Activated CD4-positive, alpha-beta memory T cell treated with anti-CD3 and anti-CD28 coated beads for 36 hours (primary cell): ENCODE measurements at regions of chrX and their contacts with region 1.

Region 1: GRCh38 chrX:47193475-47194193 is at the start of gene UBA1:
- DNase-seq: peak; percentile 94
- H3K4me3 Mint-ChIP-seq: peak within 1 kb of the TSS; percentile 92
- H3K27ac Mint-ChIP-seq: peak within 1 kb of the TSS; percentile 91
- H3K4me1 Mint-ChIP-seq: peaks cover 54% of the 10 kb centered on the region
- H3K27me3 Mint-ChIP-seq: no peaks in the 10 kb centered on the region
- total RNA-seq, gene UBA1: 266 to 278 TPM

Region 2: GRCh38 chrX:47217642-47218279 is 24.1 kb after region 1 on chrX:
- CTCF ChIA-PET with region 1: interaction called, 3 read pairs
- POLR2A ChIA-PET with region 1: interaction called, 18 read pairs
- intact Hi-C with region 1: loop called (anchors 1 kb)
- DNase-seq: peak; percentile 97
- H3K4me3 Mint-ChIP-seq: peak overlapping the region; percentile 87
- H3K27ac Mint-ChIP-seq: peak overlapping the region; percentile 97
- H3K4me1 Mint-ChIP-seq: peaks cover 32% of the 10 kb centered on the region
- H3K27me3 Mint-ChIP-seq: no peaks in the 10 kb centered on the region

Region 3: DNA sequence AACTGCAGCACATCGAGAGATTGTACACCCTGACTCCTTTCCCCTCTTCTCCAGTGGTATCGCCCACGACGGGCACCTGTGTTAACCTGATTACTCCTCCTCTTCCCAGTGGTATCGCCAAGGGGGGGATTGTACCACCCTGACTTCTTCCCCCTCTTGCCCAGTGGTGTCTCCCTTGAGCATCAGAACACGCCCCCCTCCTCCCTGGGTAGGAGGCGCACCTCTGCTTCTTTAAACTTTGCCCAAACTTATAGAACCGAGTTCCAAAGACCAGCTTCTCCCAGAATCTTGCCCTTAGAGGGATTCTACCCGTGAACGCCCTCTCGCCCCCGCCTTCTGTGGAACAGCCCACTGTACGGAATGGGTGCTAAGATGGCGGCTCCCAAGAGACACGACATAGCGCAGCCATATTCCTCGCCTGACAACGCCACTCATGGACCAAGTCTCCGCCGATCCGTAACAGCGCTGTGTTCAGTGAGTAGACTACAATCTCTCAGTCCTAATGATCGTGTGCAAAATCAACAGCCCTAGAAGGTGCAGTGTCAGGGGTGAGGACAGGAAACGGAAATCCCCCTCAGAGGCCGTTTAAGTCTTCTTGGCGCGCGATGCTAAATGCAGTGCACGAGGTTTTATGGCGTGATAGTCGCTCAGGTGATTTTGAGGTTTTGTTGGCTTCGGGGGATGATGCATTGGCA is 172.5 kb after region 1 on chrX:
- CTCF ChIA-PET with region 1: no interaction called
- POLR2A ChIA-PET with region 1: no interaction called
- intact Hi-C with region 1: loop called (anchors 1 kb)
- DNase-seq: peak; percentile 80
- H3K4me3 Mint-ChIP-seq: peak overlapping the region; percentile 83
- H3K27ac Mint-ChIP-seq: peak overlapping the region; percentile 81
- H3K4me1 Mint-ChIP-seq: peaks cover 13% of the 10 kb centered on the region
- H3K27me3 Mint-ChIP-seq: no peaks in the 10 kb centered on the region

Region 4: GRCh38 chrX:47410649-47411048 is 217.0 kb after region 1 on chrX:
- CTCF ChIA-PET with region 1: no interaction called
- POLR2A ChIA-PET with region 1: no interaction called
- intact Hi-C with region 1: no loop called
- DNase-seq: no peak
- H3K4me3 Mint-ChIP-seq: no peak overlapping the region
- H3K27ac Mint-ChIP-seq: no peak overlapping the region
- H3K4me1 Mint-ChIP-seq: no peaks in the 10 kb centered on the region
- H3K27me3 Mint-ChIP-seq: no peaks in the 10 kb centered on the region

Region 5: GRCh38 chrX:47482512-47483309 is 289.1 kb after region 1 on chrX and contains the start of gene ZNF41:
- CTCF ChIA-PET with region 1: no interaction called
- POLR2A ChIA-PET with region 1: no interaction called
- intact Hi-C with region 1: loop called (anchors 1 kb)
- DNase-seq: peak; percentile 80
- H3K4me3 Mint-ChIP-seq: peak within 1 kb of the TSS; percentile 86
- H3K27ac Mint-ChIP-seq: peak within 1 kb of the TSS; percentile 95
- H3K4me1 Mint-ChIP-seq: peaks cover 29% of the 10 kb centered on the region
- H3K27me3 Mint-ChIP-seq: no peaks in the 10 kb centered on the region
- total RNA-seq, gene ZNF41: 8.4 to 8.7 TPM

Region 6: DNA sequence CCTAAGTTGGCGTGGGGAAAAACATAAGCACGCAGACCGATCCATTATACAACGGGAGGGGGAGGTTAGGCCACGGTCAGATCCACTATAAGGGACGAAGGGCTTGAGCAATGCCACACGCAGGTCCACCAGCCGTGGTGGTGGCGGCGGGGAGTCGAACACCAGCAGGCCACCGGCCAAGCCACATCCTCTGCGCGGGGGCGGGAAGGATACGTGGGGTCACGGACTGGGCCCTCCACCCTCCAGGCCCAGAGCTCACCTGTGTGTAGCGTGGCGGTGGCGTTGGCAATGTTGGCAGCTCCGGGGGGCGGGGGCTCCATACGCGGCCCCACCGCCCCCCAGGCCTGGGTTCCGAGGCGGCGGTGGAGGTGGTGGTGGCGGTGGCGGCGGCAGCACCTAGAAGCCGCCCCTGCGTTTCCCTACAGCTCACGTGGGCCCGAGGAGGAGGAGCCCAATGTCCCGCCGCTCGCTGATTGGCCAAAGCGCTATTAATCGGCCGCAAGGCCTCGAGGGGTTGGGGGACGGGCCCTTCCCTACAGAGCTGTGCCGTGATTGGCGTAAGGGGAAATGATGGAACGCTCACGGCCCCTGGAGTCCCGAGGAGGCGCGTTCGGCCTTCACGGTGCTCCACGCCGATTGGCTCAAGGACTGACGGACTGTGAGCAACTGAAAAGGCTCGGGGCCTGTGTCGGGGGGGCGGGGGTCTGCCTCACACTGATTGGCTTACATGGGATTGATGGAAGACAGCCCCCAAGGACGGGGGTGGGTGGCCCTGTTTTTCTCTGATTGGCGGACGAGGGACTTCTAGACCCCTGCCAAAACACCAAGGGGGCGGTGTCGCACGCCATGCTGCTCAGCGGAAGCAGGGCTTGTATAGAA is 456.8 kb after region 1 on chrX and contains the start of gene ELK1:
- CTCF ChIA-PET with region 1: no interaction called
- POLR2A ChIA-PET with region 1: no interaction called
- intact Hi-C with region 1: loop called (anchors 5 kb)
- DNase-seq: peak; percentile 94
- H3K4me3 Mint-ChIP-seq: peak within 1 kb of the TSS; percentile 84
- H3K27ac Mint-ChIP-seq: peak within 1 kb of the TSS; percentile 93
- H3K4me1 Mint-ChIP-seq: peaks cover 41% of the 10 kb centered on the region
- H3K27me3 Mint-ChIP-seq: no peaks in the 10 kb centered on the region
- total RNA-seq, gene ELK1: 93.6 to 95.3 TPM